ENCODE measurements at regions of chr17 and their contacts with region 1.

Region 1: DNA sequence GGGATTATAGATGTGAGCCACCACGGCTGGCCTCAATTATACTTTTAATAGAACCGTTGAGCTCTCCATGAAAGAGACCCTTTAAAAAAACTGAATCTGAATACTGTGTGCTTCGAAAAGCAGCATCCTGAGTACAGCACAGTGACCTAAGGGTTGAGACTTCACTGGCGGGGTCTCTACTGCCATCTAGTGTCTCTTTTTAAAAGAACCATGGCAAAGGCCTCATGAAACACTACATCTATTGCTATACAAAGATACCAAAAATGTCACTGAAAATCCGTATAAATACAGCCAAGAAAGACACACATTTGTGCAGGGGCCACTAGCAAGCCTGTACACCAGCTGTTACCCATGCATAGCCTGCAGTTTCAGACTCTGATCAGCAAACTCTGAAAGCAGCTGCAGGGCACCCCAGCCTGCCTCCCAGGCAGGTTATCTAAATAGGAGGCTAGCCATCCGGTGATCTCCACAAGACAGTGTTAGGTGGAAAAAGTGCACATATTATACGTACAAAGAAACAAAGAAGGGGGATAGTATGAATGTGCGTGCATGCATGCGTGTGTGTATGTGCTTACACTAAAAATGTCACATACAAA is 35.3 kb downstream of the NPLOC4 start:
- DNase-seq: peak; percentile 44
- H3K4me3 Mint-ChIP-seq: no peak overlapping the region
- H3K27ac Mint-ChIP-seq: no peak overlapping the region
- H3K4me1 Mint-ChIP-seq: peaks cover 6% of the 10 kb centered on the region
- H3K27me3 Mint-ChIP-seq: no peaks in the 10 kb centered on the region

Region 2: DNA sequence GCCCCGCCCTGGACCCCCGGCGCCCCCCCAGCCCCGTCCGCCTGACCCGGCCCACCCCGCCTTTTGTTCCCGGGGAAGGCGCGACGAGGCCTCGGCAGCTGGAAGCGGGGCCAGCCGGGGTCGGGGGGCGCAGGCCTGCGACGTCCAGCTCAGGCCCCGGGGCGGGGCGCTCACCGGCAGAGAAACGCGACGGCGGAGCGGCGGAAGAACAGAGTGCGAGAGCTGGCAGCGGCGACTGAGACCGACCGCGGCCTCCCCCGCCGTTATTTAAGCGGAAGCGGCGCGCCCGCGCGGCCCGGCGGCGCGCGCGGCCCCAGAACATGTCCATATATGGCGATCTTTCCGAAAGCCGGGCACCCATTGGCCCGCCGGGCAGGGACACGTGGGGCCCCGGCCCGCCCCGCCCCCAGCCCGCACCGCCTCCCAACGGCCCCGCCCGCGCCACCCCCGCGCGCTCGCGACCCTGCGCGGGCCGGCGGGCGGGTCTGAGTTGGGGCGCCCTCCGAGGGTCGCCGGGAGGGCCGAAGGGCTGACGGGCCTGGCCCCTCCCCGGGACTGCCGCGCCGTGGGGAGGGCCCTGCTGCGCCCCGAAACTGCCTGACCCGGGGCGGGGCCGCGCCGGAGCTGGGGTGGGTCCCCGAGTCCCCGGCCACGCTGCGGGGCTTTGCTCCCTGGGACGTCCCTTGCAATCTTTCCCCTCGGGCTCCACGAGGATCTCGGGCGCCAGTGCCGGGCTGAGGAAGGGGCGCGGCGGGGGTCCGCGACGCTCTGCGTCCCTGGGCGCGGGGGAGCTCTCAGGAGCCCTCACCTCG is 88.9 kb before region 1 on chr17 and contains the start of gene ACTG1:
- CTCF ChIA-PET with region 1: interaction called, 6 read pairs
- POLR2A ChIA-PET with region 1: no interaction called
- intact Hi-C with region 1: loop called (anchors 2 kb)
- DNase-seq: peak; percentile 93
- H3K4me3 Mint-ChIP-seq: peak within 1 kb of the TSS; percentile 89
- H3K27ac Mint-ChIP-seq: peak within 1 kb of the TSS; percentile 92
- H3K4me1 Mint-ChIP-seq: peaks cover 30% of the 10 kb centered on the region
- H3K27me3 Mint-ChIP-seq: no peaks in the 10 kb centered on the region
- total RNA-seq, gene ACTG1: 3,773 to 3,928 TPM

Region 3: GRCh38 chr17:81537343-81537855 is 64.2 kb before region 1 on chr17:
- CTCF ChIA-PET with region 1: no interaction called
- POLR2A ChIA-PET with region 1: no interaction called
- intact Hi-C with region 1: no loop called
- DNase-seq: peak; percentile 46
- H3K4me3 Mint-ChIP-seq: no peak overlapping the region
- H3K27ac Mint-ChIP-seq: no peak overlapping the region
- H3K4me1 Mint-ChIP-seq: no peaks in the 10 kb centered on the region
- H3K27me3 Mint-ChIP-seq: peaks cover 14% of the 10 kb centered on the region

Region 4: DNA sequence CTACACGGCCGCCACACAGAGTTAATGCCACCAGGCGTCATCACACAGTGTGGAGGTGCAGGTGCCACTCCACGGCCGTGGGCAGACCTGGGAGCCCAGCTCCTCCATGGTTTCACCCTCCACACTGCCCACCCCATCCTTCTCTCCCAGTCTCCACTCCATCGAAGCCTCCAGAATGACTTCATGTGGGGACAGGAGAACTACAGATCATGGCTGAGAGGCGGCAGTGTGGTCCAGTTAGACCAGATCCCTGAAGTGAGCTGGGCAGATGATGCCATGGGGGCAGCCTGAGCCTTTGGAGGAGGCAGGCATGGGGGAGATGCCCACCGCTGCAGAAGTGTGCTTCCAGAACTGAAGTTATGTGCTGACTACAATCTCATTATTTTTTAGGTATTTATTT is 11.5 kb before region 1 on chr17:
- CTCF ChIA-PET with region 1: interaction called, 13 read pairs
- POLR2A ChIA-PET with region 1: no interaction called
- intact Hi-C with region 1: no loop called
- DNase-seq: no peak
- H3K4me3 Mint-ChIP-seq: no peak overlapping the region
- H3K27ac Mint-ChIP-seq: no peak overlapping the region
- H3K4me1 Mint-ChIP-seq: no peaks in the 10 kb centered on the region
- H3K27me3 Mint-ChIP-seq: no peaks in the 10 kb centered on the region

Region 5: GRCh38 chr17:81612172-81612970 is 10.7 kb after region 1 on chr17:
- CTCF ChIA-PET with region 1: interaction called, 26 read pairs
- POLR2A ChIA-PET with region 1: no interaction called
- intact Hi-C with region 1: no loop called
- DNase-seq: no peak
- H3K4me3 Mint-ChIP-seq: no peak overlapping the region
- H3K27ac Mint-ChIP-seq: no peak overlapping the region
- H3K4me1 Mint-ChIP-seq: peaks cover 23% of the 10 kb centered on the region
- H3K27me3 Mint-ChIP-seq: no peaks in the 10 kb centered on the region

Region 6: GRCh38 chr17:81631482-81631881 is 29.9 kb after region 1 on chr17:
- CTCF ChIA-PET with region 1: interaction called, 12 read pairs
- POLR2A ChIA-PET with region 1: no interaction called
- intact Hi-C with region 1: no loop called
- DNase-seq: no peak
- H3K4me3 Mint-ChIP-seq: no peak overlapping the region
- H3K27ac Mint-ChIP-seq: peak overlapping the region; percentile 14
- H3K4me1 Mint-ChIP-seq: peaks cover 24% of the 10 kb centered on the region
- H3K27me3 Mint-ChIP-seq: no peaks in the 10 kb centered on the region

Region 7: DNA sequence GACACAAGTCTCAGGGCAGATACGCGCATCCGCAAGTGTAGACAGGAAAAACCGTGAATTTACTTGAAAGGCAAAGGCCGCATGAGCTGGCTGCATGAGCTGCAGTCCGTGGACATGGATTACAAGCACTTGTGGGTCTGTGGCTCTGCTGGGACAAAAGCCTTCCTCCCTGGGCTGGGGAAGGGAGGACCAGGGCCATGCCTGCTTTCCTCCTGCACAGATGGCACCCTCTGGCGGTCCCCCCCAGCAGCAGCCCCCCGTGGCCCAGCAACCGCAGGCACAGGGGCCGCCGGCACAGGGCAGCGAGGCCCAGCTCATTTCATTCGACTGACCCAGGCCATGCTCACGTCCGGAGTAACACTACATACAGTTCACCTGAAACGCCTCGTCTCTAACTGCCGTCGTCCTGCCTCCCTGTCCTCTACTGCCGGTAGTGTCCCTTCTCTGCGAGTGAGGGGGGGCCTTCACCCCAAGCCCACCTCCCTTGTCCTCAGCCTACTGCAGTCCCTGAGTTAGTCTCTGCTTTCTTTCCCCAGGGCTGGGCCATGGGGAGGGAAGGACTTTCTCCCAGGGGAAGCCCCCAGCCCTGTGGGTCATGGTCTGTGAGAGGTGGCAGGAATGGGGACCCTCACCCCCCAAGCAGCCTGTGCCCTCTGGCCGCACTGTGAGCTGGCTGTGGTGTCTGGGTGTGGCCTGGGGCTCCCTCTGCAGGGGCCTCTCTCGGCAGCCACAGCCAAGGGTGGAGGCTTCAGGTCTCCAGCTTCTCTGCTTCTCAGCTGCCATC is 99.9 kb after region 1 on chr17:
- CTCF ChIA-PET with region 1: no interaction called
- POLR2A ChIA-PET with region 1: no interaction called
- intact Hi-C with region 1: no loop called
- DNase-seq: peak; percentile 42
- H3K4me3 Mint-ChIP-seq: peak overlapping the region; percentile 94
- H3K27ac Mint-ChIP-seq: peak overlapping the region; percentile 92
- H3K4me1 Mint-ChIP-seq: peaks cover 31% of the 10 kb centered on the region
- H3K27me3 Mint-ChIP-seq: no peaks in the 10 kb centered on the region